ENCODE measurements at regions of chr1 and their contacts with region 1.

Region 1: GRCh38 chr1:184296466-184297243 is 90.2 kb upstream of the C1orf21 start:
- DNase-seq: peak; percentile 91
- ATAC-seq: peak; percentile 88

Region 2: GRCh38 chr1:184242507-184242943 is 54.1 kb before region 1 on chr1:
- intact Hi-C with region 1: loop called (anchors 5 kb)
- DNase-seq: no peak
- ATAC-seq: peak; percentile 84

Region 3: GRCh38 chr1:184329962-184330868 is 33.6 kb after region 1 on chr1:
- intact Hi-C with region 1: loop called (anchors 5 kb)
- DNase-seq: no peak
- ATAC-seq: peak; percentile 37

Region 4: DNA sequence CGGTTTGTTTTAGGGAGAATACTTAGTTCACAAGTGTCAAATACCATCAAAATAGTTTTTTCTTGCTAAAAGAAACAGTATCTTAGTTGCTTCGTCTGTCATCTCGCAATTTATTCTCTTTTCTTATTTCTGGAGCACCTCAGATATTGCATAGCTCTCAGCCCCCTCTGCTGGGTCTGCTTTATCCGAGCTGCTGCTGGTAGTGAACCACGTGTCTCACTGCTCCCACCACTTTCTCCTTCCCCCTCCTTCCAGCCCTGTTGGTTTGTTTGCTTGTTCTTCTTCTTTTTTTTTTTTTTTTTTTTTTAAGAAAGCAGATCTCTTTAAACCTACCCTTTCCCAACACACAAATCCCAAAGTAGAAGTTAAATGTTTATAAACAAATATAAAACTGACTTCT is 287.2 kb after region 1 on chr1:
- intact Hi-C with region 1: no loop called
- DNase-seq: no peak
- ATAC-seq: no peak